Naive thymus-derived CD8-positive, alpha-beta T cell (primary cell): ENCODE measurements at regions of chr7 and their contacts with region 1.

Region 1: DNA sequence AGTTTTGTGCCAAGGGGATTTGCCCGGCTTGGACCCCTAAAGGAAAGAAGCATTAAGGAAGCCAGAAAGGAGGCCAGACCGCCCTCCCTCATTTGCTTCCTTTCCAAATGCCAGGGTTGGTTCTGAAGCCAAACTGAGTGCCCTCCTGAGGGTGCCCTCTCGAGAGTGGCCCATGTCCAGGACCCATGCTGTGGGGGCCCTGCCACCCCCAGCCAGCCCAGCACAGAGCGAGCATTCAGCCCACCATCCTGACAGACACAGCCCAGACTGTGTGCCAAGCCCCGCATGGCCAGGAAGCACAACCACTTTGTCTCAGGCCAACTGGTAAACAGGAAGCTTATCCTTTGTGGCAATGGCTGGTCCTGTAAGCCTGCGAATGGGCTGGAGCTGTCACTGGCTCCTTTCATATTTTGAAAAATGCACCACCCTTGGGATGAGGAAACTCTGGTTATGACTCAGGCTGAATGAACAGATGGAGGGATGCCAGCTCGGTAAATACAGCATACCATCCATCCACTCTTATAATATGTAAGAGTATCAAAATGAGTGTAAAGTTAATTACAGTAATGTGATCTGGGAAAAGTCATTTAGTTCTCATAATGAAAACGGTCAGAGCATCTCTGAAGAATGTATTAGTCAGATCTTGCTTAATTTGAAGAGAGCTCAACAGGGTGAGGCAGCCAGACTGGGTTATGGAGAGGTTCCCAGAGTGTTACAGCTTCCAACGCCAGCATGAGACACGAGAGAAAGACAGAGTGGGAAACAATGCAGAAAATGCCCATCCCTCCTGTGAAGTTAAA is 65.0 kb downstream of the STK17A start:
- DNase-seq: peak in 2 of 10 donors; percentile 27 to 36
- ATAC-seq: peak in 1 of 2 donors; percentile 10
- H3K4me3 Mint-ChIP-seq: peak overlapping the region; percentile 77 to 91 (median 86)
- H3K27ac Mint-ChIP-seq: peak overlapping the region in 9 of 10 donors; percentile 93 to 100 (median 99)
- H3K4me1 Mint-ChIP-seq: peaks cover 47 to 98% (median 93%) of the 10 kb centered on the region in 4 donors
- H3K27me3 Mint-ChIP-seq: no peaks in the 10 kb centered on the region

Region 2: GRCh38 chr7:43170571-43170970 is 477.3 kb before region 1 on chr7:
- POLR2A ChIA-PET with region 1: no interaction called
- DNase-seq: no peak
- ATAC-seq: no peak
- H3K4me3 Mint-ChIP-seq: no peak overlapping the region
- H3K27ac Mint-ChIP-seq: peak overlapping the region in 1 of 10 donors; percentile 10
- H3K4me1 Mint-ChIP-seq: no peaks in the 10 kb centered on the region
- H3K27me3 Mint-ChIP-seq: peaks cover 8 to 39% (median 10%) of the 10 kb centered on the region in 5 donors

Region 3: DNA sequence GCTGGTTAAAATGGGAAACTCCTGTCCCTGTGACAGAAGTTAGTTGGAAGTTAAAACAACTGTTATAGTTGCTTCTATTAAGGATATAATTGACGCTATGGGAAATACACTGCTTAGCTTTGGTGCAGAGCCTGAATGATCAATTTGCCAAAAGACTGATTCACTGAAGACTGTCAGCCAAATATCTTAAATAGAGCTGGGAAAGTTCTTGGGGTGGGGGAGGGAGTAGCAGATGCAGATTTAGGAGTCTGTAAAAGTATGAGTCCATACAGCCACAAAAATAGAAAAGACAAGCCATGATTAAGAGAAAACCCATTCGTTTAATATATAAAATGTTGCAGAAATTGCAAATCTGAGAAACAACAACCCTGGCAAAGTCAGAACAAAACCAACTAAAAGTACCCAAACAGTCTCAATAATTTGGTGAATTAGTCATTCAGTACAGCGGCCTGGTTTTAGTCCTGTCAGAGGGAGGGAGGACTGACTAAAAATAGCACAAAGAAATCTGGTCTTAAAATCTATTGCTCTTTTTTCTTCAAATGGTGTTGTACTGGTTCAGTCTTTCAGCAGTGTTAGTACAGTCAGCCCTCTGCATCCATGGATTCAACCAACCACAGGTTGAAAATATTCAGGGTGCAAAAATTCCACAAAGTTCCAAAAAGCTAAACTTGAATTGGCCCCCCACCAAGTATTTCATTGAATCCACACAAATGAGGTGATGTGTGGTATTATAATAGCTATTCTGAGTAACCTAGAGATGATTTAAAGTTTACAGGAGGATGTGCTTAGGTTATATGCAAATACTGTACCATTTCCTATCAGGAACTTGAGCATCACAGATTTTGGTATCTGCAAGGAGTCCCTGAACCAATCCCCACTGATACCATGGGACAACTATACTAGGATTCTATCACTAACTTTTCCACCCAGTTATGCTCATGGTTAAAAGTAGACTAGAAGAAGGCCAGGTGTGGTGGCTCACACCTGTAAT is 35.0 kb before region 1 on chr7:
- POLR2A ChIA-PET with region 1: interaction called, 28 read pairs
- DNase-seq: no peak
- ATAC-seq: peak; percentile 29 to 40
- H3K4me3 Mint-ChIP-seq: peak overlapping the region; percentile 8 to 73 (median 55)
- H3K27ac Mint-ChIP-seq: peak overlapping the region in 9 of 10 donors; percentile 72 to 93 (median 90)
- H3K4me1 Mint-ChIP-seq: peaks cover 39 to 77% (median 54%) of the 10 kb centered on the region in 4 donors
- H3K27me3 Mint-ChIP-seq: no peaks in the 10 kb centered on the region

Region 4: GRCh38 chr7:43625453-43625852 is 22.4 kb before region 1 on chr7:
- POLR2A ChIA-PET with region 1: interaction called, 306 read pairs
- DNase-seq: peak in 9 of 10 donors; percentile 35 to 78 (median 72)
- ATAC-seq: peak; percentile 48 to 83
- H3K4me3 Mint-ChIP-seq: peak overlapping the region; percentile 63 to 85 (median 72)
- H3K27ac Mint-ChIP-seq: peak overlapping the region in 8 of 10 donors; percentile 52 to 98 (median 94)
- H3K4me1 Mint-ChIP-seq: peaks cover 43 to 94% (median 86%) of the 10 kb centered on the region in 4 donors
- H3K27me3 Mint-ChIP-seq: peaks cover 0 to 2% (median 0%) of the 10 kb centered on the region in 5 donors

Region 5: GRCh38 chr7:43669286-43670081 is 21.6 kb after region 1 on chr7:
- POLR2A ChIA-PET with region 1: interaction called, 13 read pairs
- DNase-seq: peak in 8 of 10 donors; percentile 43 to 77 (median 55)
- ATAC-seq: peak; percentile 78 to 83
- H3K4me3 Mint-ChIP-seq: peak overlapping the region; percentile 47 to 81 (median 68)
- H3K27ac Mint-ChIP-seq: peak overlapping the region; percentile 63 to 90 (median 88)
- H3K4me1 Mint-ChIP-seq: peaks cover 26 to 84% (median 76%) of the 10 kb centered on the region in 4 donors
- H3K27me3 Mint-ChIP-seq: no peaks in the 10 kb centered on the region

Region 6: GRCh38 chr7:43693687-43694398 is 46.0 kb after region 1 on chr7:
- POLR2A ChIA-PET with region 1: interaction called, 56 read pairs
- DNase-seq: no peak
- ATAC-seq: no peak
- H3K4me3 Mint-ChIP-seq: no peak overlapping the region
- H3K27ac Mint-ChIP-seq: no peak overlapping the region
- H3K4me1 Mint-ChIP-seq: peaks cover 12 to 34% (median 31%) of the 10 kb centered on the region in 4 donors
- H3K27me3 Mint-ChIP-seq: no peaks in the 10 kb centered on the region